Breast epithelium (tissue), 4 donors: ENCODE measurements at regions of chr14 and their contacts with region 1.

Region 1: DNA sequence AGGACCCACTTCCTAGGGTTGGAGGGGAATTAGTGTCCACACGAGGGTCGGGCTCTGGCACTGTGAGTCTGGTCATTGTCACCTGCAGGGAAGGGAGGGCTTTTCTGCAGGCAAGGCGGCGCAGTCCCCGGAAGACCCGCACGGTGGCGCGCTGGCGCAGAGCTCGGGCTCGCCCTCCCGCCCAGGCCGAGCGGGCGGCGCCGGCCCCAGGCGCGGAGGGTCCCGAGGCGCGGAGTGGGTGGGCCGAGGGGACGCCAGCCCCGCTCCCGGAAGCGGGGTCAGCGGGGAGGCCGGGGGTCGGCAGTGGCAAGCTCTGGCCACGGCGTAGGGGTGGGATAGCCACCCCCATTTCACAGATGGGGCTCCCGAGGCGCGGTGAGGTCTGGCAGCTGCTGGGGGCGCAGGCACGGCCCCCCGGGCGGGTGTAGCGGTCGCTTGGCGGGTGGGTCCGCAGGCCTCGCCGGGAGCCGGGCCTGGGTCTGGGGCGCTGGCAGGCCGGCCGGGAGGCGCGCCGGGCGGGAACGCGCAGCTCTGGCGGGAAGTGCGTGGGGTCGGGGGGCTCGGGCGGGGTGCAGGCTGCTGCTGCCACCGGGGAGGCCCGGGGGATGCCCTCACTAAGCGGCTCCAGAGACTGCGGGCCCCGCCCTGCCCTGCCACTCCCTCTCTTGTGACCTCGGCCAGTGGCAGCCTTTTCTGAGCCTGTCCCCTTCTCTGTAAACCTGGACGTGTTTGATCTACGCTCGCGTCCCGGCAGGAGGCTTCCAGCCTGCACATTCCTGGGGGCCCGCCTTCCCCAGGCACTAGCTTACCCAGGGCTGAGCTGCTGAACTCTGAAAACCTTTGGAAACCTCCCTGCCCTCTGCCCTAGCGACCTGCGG is 46.1 kb downstream of the CYP46A1 start:
- DNase-seq: peak in 1 of 2 donors; percentile 64
- H3K4me3 ChIP-seq: peak overlapping the region; percentile 46 to 74 (median 52)
- H3K27ac ChIP-seq: peak overlapping the region in 1 of 2 donors; percentile 43
- H3K4me1 ChIP-seq: no peaks in the 10 kb centered on the region
- H3K27me3 ChIP-seq: peaks cover 0 to 3% of the 10 kb centered on the region in 2 donors
- CTCF ChIP-seq: peak; percentile 34 to 88 (median 47)
- POLR2A ChIP-seq: no peak

Region 2: DNA sequence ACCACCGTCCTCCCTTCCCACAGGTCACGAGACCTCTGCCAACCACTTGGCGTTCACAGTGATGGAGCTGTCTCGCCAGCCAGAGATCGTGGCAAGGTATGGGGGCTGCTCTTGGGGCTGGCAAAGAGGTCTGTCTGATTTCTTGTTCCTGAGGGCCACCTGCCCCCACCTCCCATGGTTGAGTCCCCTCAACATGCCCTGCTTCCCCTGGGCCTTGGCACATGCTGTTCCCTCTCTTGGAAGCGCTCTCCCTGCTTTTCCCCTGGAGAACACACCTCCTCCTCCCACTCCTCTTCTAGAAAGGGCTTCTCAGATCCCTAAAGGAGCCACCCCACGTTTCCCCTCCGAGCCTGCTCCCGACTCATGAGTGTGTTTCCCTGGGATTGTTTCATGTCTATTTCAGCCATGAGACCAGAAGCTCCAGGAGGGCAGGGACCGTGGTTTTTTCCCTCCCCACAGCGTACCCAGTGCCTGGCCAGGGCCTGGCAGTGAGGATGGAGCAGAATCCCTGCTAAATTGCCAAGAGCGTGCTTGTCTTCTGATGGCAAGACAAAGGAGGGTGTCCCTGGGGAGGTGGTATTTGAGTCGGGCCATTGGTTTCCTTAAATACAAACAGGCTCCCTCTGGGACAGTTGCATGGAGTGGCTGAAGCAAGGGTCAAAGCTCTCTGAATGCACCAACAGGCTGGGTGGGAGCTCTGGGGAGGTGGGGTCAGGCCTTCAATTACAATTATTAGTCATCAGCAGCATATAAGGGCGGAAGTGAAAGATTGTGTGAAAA is 12.0 kb before region 1 on chr14:
- intact Hi-C with region 1: no loop called
- DNase-seq: peak in 1 of 2 donors; percentile 3
- H3K4me3 ChIP-seq: no peak overlapping the region
- H3K27ac ChIP-seq: no peak overlapping the region
- H3K4me1 ChIP-seq: no peaks in the 10 kb centered on the region
- H3K27me3 ChIP-seq: no peaks in the 10 kb centered on the region
- CTCF ChIP-seq: no peak
- POLR2A ChIP-seq: no peak

Region 3: GRCh38 chr14:99884834-99885648 is 154.8 kb after region 1 on chr14:
- intact Hi-C with region 1: loop called (anchors 5 kb)
- DNase-seq: no peak
- H3K4me3 ChIP-seq: no peak overlapping the region
- H3K27ac ChIP-seq: no peak overlapping the region
- H3K4me1 ChIP-seq: no peaks in the 10 kb centered on the region
- H3K27me3 ChIP-seq: no peaks in the 10 kb centered on the region
- CTCF ChIP-seq: peak; percentile 48 to 81 (median 70)
- POLR2A ChIP-seq: no peak